K562 (cell line): ENCODE measurements at regions of chr4 and their contacts with region 1.

Region 1: GRCh38 chr4:6794189-6794588 is 11.7 kb downstream of the KIAA0232 start:
- DNase-seq: no peak
- ATAC-seq: peak; percentile 19; the same call in 2 of the 3 replicates
- H3K4me3 ChIP-seq: no peak overlapping the region
- H3K27ac ChIP-seq: no peak overlapping the region; the same call in 2 of the 3 replicates
- H3K4me1 ChIP-seq: peaks cover 0 to 9% of the 10 kb centered on the region in 2 experiments; a peak in 2 of 5 replicates
- H3K27me3 ChIP-seq: no peaks in the 10 kb centered on the region
- CTCF ChIP-seq: no peak
- EP300 ChIP-seq: no peak
- POLR2A ChIP-seq: no peak
- RAD21 ChIP-seq: no peak

Region 2: GRCh38 chr4:6608758-6609414 is 185.3 kb before region 1 on chr4:
- CTCF ChIA-PET with region 1: no interaction called
- POLR2A ChIA-PET with region 1: no interaction called
- in situ Hi-C with region 1: no loop called
- intact Hi-C with region 1: no loop called
- DNase-seq: peak in 2 of 4 experiments; percentile 28
- ATAC-seq: peak; percentile 65
- H3K4me3 ChIP-seq: no peak overlapping the region
- H3K27ac ChIP-seq: no peak overlapping the region
- H3K4me1 ChIP-seq: peaks cover 0 to under 1% of the 10 kb centered on the region in 2 experiments; a peak in 1 of 5 replicates
- H3K27me3 ChIP-seq: no peaks in the 10 kb centered on the region; a peak in 1 of 5 replicates
- CTCF ChIP-seq: peak; percentile 22 to 30 (median 26); a peak in 3 of 6 replicates
- EP300 ChIP-seq: no peak
- POLR2A ChIP-seq: no peak
- RAD21 ChIP-seq: no peak

Region 3: GRCh38 chr4:6806924-6807636 is 12.9 kb after region 1 on chr4:
- CTCF ChIA-PET with region 1: no interaction called
- POLR2A ChIA-PET with region 1: interaction called, 20 read pairs
- in situ Hi-C with region 1: no loop called
- intact Hi-C with region 1: no loop called
- DNase-seq: no peak
- ATAC-seq: peak; percentile 6; the same call in 2 of the 3 replicates
- H3K4me3 ChIP-seq: no peak overlapping the region
- H3K27ac ChIP-seq: peak overlapping the region; percentile 45; the same call in 1 of the 3 replicates
- H3K4me1 ChIP-seq: peaks cover 4 to 39% of the 10 kb centered on the region in 2 experiments
- H3K27me3 ChIP-seq: no peaks in the 10 kb centered on the region
- CTCF ChIP-seq: no peak
- EP300 ChIP-seq: no peak
- POLR2A ChIP-seq: no peak
- RAD21 ChIP-seq: no peak